Activated CD8-positive, alpha-beta T cell treated with anti-CD3 and anti-CD28 coated beads for 36 hours (primary cell): ENCODE measurements at regions of chr4 and their contacts with region 1.

Region 1: GRCh38 chr4:13430834-13431568 is 53.1 kb downstream of the RAB28 start:
- DNase-seq: no peak
- ATAC-seq: no peak
- H3K4me3 Mint-ChIP-seq: no peak overlapping the region
- H3K27ac Mint-ChIP-seq: no peak overlapping the region
- H3K4me1 Mint-ChIP-seq: peaks cover 21% of the 10 kb centered on the region
- H3K27me3 Mint-ChIP-seq: no peaks in the 10 kb centered on the region
- CTCF ChIP-seq: peak; percentile 36

Region 2: DNA sequence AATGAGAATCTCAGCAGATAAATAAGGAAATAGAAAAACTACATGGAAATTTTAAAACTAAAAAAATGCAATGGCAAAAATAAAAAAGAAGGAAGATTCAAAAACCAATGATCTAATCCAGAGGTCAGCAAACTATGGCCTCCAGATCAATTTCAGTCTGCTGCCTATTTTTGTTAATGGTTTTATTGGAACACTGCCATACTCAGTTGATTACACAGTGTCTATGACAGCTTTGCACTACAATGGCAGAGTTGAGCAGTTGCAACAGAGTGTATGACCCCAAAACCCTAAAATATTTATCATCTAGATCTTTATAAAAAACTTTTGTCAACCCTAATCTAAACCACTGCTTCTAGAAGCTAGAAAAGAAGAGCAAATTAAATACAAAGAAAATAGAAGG is 117.1 kb before region 1 on chr4:
- CTCF ChIA-PET with region 1: no interaction called
- POLR2A ChIA-PET with region 1: no interaction called
- intact Hi-C with region 1: no loop called
- DNase-seq: no peak
- ATAC-seq: no peak
- H3K4me3 Mint-ChIP-seq: no peak overlapping the region
- H3K27ac Mint-ChIP-seq: no peak overlapping the region
- H3K4me1 Mint-ChIP-seq: no peaks in the 10 kb centered on the region
- H3K27me3 Mint-ChIP-seq: no peaks in the 10 kb centered on the region
- CTCF ChIP-seq: no peak

Region 3: GRCh38 chr4:13449590-13449989 is 18.6 kb after region 1 on chr4:
- CTCF ChIA-PET with region 1: interaction called, 12 read pairs
- POLR2A ChIA-PET with region 1: no interaction called
- intact Hi-C with region 1: no loop called
- DNase-seq: no peak
- ATAC-seq: no peak
- H3K4me3 Mint-ChIP-seq: no peak overlapping the region
- H3K27ac Mint-ChIP-seq: no peak overlapping the region
- H3K4me1 Mint-ChIP-seq: peaks cover 16% of the 10 kb centered on the region
- H3K27me3 Mint-ChIP-seq: no peaks in the 10 kb centered on the region
- CTCF ChIP-seq: no peak